ENCODE measurements at regions of chr5 and their contacts with region 1.

Region 1: GRCh38 chr5:93328833-93329232 is 252.2 kb downstream of the NR2F1-AS1 start:
- DNase-seq: no peak
- H3K4me3 ChIP-seq: no peak overlapping the region
- CTCF ChIP-seq: no peak

Region 2: DNA sequence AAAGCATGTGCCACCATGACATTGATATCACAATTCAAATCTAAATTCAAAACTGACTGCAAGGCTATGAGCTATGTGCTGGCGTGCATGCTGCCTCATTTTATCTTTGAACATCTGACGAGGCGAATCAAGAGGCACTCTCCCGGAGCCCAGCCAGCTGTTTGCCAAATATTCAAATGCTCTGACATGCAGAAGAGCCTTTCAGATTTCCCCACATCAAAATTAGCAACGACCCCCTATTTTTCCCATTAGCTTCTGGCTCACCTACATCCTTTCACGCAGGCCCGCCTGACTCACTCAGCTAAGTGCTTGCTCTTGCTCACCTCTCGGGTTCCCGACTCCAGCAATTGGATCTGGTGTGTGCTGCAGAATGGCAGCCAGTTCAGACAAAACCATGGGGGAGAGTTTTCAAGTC is 93.2 kb after region 1 on chr5:
- in situ Hi-C with region 1: loop called (anchors 5 kb)
- DNase-seq: no peak
- H3K4me3 ChIP-seq: no peak overlapping the region
- CTCF ChIP-seq: no peak

Measured in astrocyte of the cerebellum (primary cell).